A673 (cell line): ENCODE measurements at regions of chr14 and their contacts with region 1.

Region 1: GRCh38 chr14:71187647-71188356 is 280.5 kb downstream of the PCNX1 start:
- DNase-seq: no peak
- H3K4me3 ChIP-seq: no peak overlapping the region
- H3K27ac ChIP-seq: no peak overlapping the region
- H3K4me1 ChIP-seq: peaks cover 5% of the 10 kb centered on the region
- H3K27me3 ChIP-seq: no peaks in the 10 kb centered on the region
- CTCF ChIP-seq: no peak

Region 2: GRCh38 chr14:69535230-69535848 is 1652.5 kb before region 1 on chr14:
- CTCF ChIA-PET with region 1: interaction called, 11 read pairs
- POLR2A ChIA-PET with region 1: no interaction called
- intact Hi-C with region 1: no loop called
- DNase-seq: peak; percentile 66
- H3K4me3 ChIP-seq: no peak overlapping the region
- H3K27ac ChIP-seq: no peak overlapping the region
- H3K4me1 ChIP-seq: no peaks in the 10 kb centered on the region
- H3K27me3 ChIP-seq: peaks cover 10% of the 10 kb centered on the region
- CTCF ChIP-seq: peak; percentile 74